Heart left ventricle (tissue), 16 donors: ENCODE measurements at regions of chr19 and their contacts with region 1.

Region 1: DNA sequence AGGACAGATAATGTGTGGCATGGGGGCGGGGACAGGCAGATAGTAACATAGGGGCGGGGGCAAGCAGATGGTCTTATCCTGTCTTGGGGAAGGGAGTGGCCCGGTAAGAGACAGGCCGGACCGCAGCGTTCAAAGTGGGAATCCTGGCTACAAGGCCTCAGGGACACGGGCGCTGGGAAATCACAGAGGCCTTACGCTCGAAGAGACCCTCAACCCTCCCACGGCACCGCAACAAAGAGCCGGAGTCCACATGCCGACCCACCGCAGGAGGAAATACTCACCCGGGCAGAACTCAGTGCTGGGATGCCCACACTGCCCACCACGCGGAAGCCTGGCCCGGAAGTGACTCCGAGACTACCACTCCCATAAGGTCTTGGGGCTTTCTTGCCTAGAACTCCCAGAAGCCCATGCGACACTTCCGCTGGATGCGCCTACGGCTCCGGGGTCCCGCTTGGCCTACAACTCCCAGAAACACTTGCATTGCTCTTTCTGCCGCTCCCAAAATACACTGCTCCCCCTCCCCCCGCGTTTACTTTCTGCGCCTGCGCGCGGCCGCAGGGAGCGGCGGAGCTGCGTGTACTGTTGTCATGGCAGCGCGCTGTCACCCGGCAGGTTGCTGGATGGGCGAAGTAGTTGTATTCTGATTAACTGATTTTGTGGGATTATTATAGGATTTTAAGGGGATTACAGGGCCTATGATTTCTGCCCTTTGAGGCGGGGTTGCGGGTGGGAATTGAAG is at the start of gene CTU1:
- DNase-seq: peak; percentile 98 to 99 (median 99)
- ATAC-seq: peak; percentile 98 to 99 (median 99)
- H3K4me3 ChIP-seq: peak within 1 kb of the TSS; percentile 41 to 91 (median 77)
- H3K27ac ChIP-seq: peak within 1 kb of the TSS; percentile 13 to 81 (median 71)
- H3K4me1 ChIP-seq: peaks cover 0 to 26% (median 13%) of the 10 kb centered on the region in 12 donors
- H3K27me3 ChIP-seq: no peaks in the 10 kb centered on the region
- CTCF ChIP-seq: peak in 1 of 12 donors; percentile 17
- POLR2A ChIP-seq: peak in 1 of 2 donors; percentile 61
- total RNA-seq, gene CTU1: 2.5 to 11.2 (median 4.2) TPM

Region 2: GRCh38 chr19:50376166-50377050 is 731.8 kb before region 1 on chr19 and contains the start of gene NR1H2:
- intact Hi-C with region 1: loop called in 2 of 10 experiments (anchors 10 kb)
- DNase-seq: peak; percentile 95 to 97 (median 95)
- ATAC-seq: peak; percentile 91 to 98 (median 93)
- H3K4me3 ChIP-seq: peak within 1 kb of the TSS; percentile 74 to 99 (median 92)
- H3K27ac ChIP-seq: peak within 1 kb of the TSS; percentile 96 to 100 (median 99)
- H3K4me1 ChIP-seq: peaks cover 0 to 43% (median 21%) of the 10 kb centered on the region in 12 donors
- H3K27me3 ChIP-seq: no peaks in the 10 kb centered on the region
- CTCF ChIP-seq: no peak
- POLR2A ChIP-seq: peak in 1 of 2 donors; percentile 79
- total RNA-seq, gene NR1H2: 66.2 to 162 (median 74.3) TPM

Region 3: GRCh38 chr19:50804420-50805272 is 303.6 kb before region 1 on chr19:
- intact Hi-C with region 1: loop called in 1 of 10 experiments (anchors 10 kb)
- DNase-seq: peak; percentile 98 to 100 (median 99)
- ATAC-seq: peak; percentile 99 to 100 (median 100)
- H3K4me3 ChIP-seq: peak overlapping the region; percentile 61 to 98 (median 79)
- H3K27ac ChIP-seq: peak overlapping the region; percentile 88 to 99 (median 97)
- H3K4me1 ChIP-seq: peaks cover 3 to 26% (median 16%) of the 10 kb centered on the region in 12 donors
- H3K27me3 ChIP-seq: no peaks in the 10 kb centered on the region
- CTCF ChIP-seq: no peak
- POLR2A ChIP-seq: no peak

Region 4: DNA sequence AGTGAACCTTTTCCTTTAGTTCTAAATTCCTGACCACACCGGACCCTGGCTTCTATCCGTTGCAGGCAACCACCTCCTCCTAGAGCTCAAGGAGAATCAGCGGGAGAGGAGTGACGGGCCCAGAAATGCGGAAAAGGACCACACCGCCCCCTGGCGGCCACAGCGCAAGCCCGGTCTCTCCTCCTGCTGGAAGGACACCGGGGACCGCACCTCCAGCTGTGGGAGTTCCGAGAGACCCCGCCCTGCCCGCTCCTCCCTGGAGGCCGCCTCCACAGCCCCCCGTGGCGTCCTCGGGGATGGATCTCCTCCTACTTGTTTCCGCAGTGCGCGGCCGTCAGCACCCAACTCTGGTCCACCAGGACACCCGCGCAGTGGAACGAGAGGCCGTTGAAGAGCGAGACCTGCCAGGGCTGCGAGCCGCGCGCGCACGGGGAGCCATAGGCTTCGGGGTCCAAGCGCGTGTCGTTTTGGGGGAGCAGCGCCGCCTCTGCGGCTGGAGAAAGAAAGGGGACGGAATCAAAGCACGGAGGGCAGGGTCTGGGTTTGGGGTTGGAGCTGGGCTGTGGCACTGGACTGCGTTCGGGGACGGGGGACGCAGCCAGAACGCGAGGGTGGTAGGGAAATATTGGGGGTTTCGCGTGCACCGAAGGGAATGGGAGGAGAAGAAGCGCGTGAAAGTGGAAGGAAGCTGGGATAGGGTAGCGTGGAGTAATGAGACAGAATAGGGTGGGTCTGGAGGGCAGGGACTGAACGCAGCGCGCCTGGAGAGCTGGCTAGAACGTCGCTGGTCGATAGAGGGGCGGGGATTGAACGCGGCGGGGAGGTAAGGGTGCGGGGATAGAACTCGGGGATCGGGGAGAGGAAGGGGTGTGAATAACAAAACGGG is 91.2 kb before region 1 on chr19:
- intact Hi-C with region 1: no loop called
- DNase-seq: peak in 3 of 5 donors; percentile 30 to 55 (median 43)
- ATAC-seq: peak in 3 of 4 donors; percentile 39 to 65 (median 57)
- H3K4me3 ChIP-seq: peak overlapping the region in 11 of 12 donors; percentile 7 to 48 (median 37)
- H3K27ac ChIP-seq: no peak overlapping the region
- H3K4me1 ChIP-seq: peaks cover 0 to 33% (median 15%) of the 10 kb centered on the region in 12 donors
- H3K27me3 ChIP-seq: peaks cover 30 to 78% (median 56%) of the 10 kb centered on the region in 9 donors
- CTCF ChIP-seq: peak; percentile 28 to 76 (median 60)
- POLR2A ChIP-seq: no peak

Region 5: DNA sequence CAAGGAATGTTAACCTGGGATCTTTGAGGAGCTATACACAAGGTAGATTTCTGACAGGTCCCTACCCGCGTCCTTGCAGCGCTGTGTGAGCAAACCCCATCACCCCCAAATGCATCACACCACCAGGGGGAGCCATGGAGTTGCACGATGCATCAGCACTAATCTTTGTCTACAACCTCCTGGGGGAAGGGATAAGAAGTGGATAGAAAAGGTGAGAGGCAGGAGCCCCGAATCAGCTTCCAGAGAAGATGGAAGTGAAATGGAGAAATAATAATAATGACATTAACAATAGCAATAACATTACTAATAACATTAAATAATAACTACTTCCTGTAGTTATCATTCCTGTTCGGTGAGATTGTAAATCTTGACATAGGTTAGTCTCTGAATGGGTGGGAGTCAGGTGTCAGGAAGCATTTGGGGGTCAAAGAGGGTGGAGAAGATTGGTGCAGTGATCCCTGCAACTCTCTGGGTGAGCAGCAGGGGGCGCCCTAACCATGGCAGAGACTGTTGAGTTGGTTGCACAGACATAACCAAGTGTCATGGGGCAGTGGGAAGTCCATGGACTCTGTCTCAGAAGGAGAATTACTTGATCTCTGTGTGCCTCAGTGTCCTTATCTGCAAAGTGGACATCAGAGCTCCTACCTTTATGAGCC is 50.4 kb after region 1 on chr19:
- intact Hi-C with region 1: no loop called
- DNase-seq: peak in 3 of 5 donors; percentile 49 to 78 (median 57)
- ATAC-seq: peak; percentile 34 to 60 (median 42)
- H3K4me3 ChIP-seq: no peak overlapping the region
- H3K27ac ChIP-seq: no peak overlapping the region
- H3K4me1 ChIP-seq: peaks cover 0 to 4% (median 0%) of the 10 kb centered on the region in 12 donors
- H3K27me3 ChIP-seq: peaks cover 0 to 27% (median 0%) of the 10 kb centered on the region in 9 donors
- CTCF ChIP-seq: peak; percentile 26 to 74 (median 50)
- POLR2A ChIP-seq: no peak

Region 6: GRCh38 chr19:51586103-51586728 is 478.0 kb after region 1 on chr19:
- intact Hi-C with region 1: loop called in 3 of 10 experiments (anchors 5 to 10 kb)
- DNase-seq: no peak
- ATAC-seq: no peak
- H3K4me3 ChIP-seq: no peak overlapping the region
- H3K27ac ChIP-seq: no peak overlapping the region
- H3K4me1 ChIP-seq: no peaks in the 10 kb centered on the region
- H3K27me3 ChIP-seq: no peaks in the 10 kb centered on the region
- CTCF ChIP-seq: no peak
- POLR2A ChIP-seq: no peak

Region 7: DNA sequence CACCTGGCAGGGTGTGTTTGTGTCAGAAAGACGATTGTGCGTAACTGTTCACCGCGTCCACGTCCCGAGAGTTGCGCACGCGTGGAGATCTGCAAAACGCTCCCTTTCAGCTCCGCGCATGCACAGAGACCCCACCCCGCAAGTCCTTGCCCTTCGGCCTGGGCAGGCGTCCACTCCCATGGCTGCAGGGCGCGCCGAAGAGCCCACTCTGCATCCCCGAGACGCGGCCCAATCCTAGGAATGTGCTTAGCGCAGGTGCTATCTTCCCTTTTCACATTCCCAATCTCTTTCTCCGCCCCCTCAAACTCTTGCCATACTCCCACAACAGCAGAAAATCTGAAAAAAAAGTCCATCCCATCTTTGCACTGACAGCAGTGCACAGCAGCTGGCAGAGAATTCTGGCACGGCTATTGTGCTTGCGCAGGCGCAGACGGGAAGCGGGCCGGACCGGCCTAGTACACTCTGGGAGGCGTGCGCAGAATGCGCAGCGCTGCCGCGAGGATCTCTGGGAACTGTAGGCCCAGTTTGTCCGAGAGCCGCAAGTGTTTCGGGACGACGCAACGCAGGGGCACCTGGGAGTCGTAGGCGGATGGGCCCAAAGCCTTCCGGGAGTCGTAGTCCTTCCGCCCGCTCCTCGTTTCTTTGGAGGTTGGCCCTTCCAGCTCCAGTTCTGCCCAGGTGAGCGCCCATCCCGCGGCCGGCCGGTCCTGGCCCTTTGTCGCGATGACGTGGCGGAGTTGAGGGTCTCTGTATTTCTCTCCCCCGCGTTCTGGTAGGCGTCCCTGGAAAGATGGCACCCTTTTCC is 485.9 kb after region 1 on chr19:
- intact Hi-C with region 1: loop called in 3 of 10 experiments (anchors 5 to 10 kb)
- DNase-seq: peak; percentile 98 to 99 (median 99)
- ATAC-seq: peak; percentile 100
- H3K4me3 ChIP-seq: peak overlapping the region; percentile 51 to 82 (median 70)
- H3K27ac ChIP-seq: peak overlapping the region in 10 of 12 donors; percentile 22 to 70 (median 44)
- H3K4me1 ChIP-seq: peaks cover 0 to 19% (median 12%) of the 10 kb centered on the region in 12 donors
- H3K27me3 ChIP-seq: peaks cover 0 to 20% (median under 1%) of the 10 kb centered on the region in 9 donors
- CTCF ChIP-seq: no peak
- POLR2A ChIP-seq: peak in 1 of 2 donors; percentile 52